Dorsolateral prefrontal cortex (tissue), 120 donors: ENCODE measurements at regions of chr1 and their contacts with region 1.

Region 1: DNA sequence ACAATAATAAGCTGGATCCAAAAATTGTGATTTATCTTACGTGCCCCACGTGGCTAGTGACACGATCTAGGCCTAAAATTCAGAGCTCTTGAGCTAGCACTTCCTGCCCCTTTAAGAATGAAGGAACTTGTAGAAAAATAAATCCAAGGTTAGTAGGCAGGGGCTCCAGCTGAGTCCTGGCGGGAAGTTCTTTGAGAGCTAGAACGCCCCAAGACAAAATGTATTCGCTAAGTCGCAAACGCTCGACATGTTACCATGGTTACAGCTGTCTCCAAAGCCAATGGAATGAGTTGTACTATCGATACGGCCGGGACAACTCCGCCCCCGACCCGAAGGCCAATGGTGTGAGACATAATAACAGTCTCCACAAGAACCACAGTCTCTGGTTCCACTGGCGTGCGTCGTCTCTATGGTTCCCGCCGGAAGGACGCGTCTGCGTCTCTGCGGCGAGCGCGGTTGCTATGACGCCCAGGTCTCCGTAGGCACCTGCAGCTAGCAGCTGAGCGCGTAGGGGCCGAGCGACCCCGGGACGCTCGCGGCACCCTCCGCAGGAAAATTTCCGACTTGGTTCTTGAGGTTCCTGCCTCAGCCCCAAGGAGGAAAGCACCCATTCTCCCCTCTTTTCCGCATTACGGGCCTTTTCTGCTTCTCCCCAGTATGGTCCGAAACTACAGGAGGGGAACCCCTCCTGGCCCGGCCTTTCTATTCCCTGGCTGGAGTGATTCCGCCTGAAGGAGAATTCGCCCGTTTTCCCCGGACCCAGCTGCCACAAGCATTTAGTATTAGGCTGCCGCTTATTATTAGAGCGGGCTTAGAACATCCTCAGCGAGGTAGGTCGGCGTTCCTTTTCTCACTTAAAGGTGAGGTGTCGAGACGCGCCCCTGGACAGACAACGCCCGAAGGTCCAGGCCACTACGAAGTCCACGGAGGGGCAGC is at the start of gene CCDC30:
- DNase-seq: peak; percentile 78 to 99 (median 96)
- H3K4me3 ChIP-seq: peak within 1 kb of the TSS; percentile 41 to 98 (median 78)
- H3K27ac ChIP-seq: peak within 1 kb of the TSS in 34 of 59 donors; percentile 4 to 78 (median 37)
- H3K27me3 ChIP-seq: no peaks in the 10 kb centered on the region
- CTCF ChIP-seq: peak in 13 of 56 donors; percentile 7 to 45 (median 15)
- total RNA-seq, gene CCDC30: 13.0 to 39.2 (median 25.7) TPM

Region 2: GRCh38 chr1:41673378-41673777 is 789.7 kb before region 1 on chr1:
- intact Hi-C with region 1: no loop called
- DNase-seq: no peak
- H3K4me3 ChIP-seq: no peak overlapping the region
- H3K27ac ChIP-seq: peak overlapping the region in 41 of 59 donors; percentile 15 to 89 (median 67)
- H3K27me3 ChIP-seq: no peaks in the 10 kb centered on the region
- CTCF ChIP-seq: no peak

Region 3: DNA sequence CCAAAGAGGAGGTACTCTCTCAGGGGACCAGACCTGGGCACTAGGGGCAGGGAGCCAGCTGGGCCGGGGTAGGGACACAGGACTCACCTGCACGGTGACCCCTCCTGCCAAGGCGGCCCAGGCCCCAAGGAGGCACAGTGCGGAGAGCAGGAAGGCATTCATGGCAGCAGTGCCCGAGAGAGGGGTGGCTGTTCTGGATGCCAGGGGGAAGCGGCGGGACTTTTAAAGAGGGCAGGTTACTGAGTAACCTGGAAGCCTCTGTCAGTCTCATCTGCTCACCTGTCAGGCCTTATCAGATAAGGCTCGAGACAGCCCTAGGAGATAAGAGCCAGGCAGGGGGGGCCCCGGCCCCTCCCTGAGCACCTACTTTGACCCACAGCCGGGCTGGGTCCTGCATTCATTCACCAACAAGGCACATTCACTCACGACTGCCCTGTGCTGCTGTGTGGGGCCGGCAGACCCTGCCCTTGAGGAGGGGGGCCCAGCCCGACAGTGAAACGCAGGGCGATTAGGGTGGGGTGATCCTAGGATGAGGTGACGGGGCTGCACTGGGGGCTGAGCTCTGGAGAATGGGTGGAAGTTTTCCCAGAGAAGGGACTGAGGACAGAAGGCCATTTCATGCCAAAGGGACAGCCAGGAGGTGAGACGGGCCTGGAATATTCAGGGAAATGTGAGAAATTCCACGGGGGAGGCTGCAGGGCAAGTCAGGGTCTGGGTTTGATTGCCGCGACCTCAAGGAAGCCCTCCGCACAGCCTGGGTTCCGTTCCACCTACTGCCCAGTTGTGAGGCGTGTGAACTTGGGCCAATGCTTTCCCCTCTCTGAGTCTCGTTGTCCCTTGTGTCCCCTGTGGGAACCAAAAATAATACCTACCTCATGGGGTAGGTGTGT is 298.3 kb before region 1 on chr1 and contains the start of gene GUCA2A:
- intact Hi-C with region 1: no loop called
- DNase-seq: no peak
- H3K4me3 ChIP-seq: no peak within 1 kb of the TSS
- H3K27ac ChIP-seq: no peak within 1 kb of the TSS
- H3K27me3 ChIP-seq: peaks cover 0 to 6% (median 0%) of the 10 kb centered on the region in 45 donors
- CTCF ChIP-seq: no peak
- total RNA-seq, gene GUCA2A: not detected

Region 4: GRCh38 chr1:42380586-42381279 is 82.4 kb before region 1 on chr1 and contains the start of gene RIMKLA:
- intact Hi-C with region 1: loop called in 1 of 2 experiments (anchors 2 kb)
- DNase-seq: peak; percentile 41 to 85 (median 62)
- H3K4me3 ChIP-seq: peak within 1 kb of the TSS; percentile 59 to 90 (median 76)
- H3K27ac ChIP-seq: peak within 1 kb of the TSS in 56 of 59 donors; percentile 12 to 91 (median 75)
- H3K27me3 ChIP-seq: no peaks in the 10 kb centered on the region
- CTCF ChIP-seq: peak in 2 of 56 donors; percentile 8 to 14
- total RNA-seq, gene RIMKLA: 10.3 to 57.9 (median 33.5) TPM

Region 5: GRCh38 chr1:42793824-42794223 is 330.7 kb after region 1 on chr1:
- intact Hi-C with region 1: no loop called
- DNase-seq: no peak
- H3K4me3 ChIP-seq: no peak overlapping the region
- H3K27ac ChIP-seq: no peak overlapping the region
- H3K27me3 ChIP-seq: no peaks in the 10 kb centered on the region
- CTCF ChIP-seq: no peak